Activated T-helper 2 cell treated with anti-CD3 and anti-CD28 coated beads, Interferon-gamma antibody, Interleukin-2, Interleukin-4, amounts not matched to agents 10 μg/mL and 5 μg/mL and 100 μg/mL, durations not matched to agents 14 hours and 24 hours and 36 hours (primary cell): ENCODE measurements at regions of chr2 and their contacts with region 1.

Region 1: GRCh38 chr2:181123798-181124231 is 143.4 kb downstream of the UBE2E3 start:
- DNase-seq: peak; percentile 74
- H3K4me3 Mint-ChIP-seq: peak overlapping the region; percentile 76
- H3K27ac Mint-ChIP-seq: peak overlapping the region; percentile 95
- H3K4me1 Mint-ChIP-seq: peaks cover 61% of the 10 kb centered on the region
- H3K27me3 Mint-ChIP-seq: no peaks in the 10 kb centered on the region

Region 2: DNA sequence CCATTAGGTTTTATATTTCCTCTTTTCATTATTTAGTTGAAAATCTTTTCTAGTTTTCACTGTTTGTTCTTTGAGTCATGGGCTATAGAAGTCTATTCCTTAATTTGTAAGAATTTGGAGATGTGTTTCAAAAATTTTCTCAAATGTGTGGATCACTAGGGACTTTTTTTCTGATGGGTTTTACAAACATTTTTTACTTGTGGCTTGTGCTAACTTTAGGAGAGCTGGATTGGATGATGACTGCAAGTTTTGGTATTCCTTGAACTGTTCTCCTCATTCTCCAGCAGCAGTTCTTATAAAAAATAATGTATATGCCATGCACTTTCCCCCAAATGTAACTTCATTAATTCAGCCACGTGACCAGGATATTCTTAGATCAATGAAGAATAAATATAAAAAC is 1022.0 kb before region 1 on chr2:
- intact Hi-C with region 1: no loop called
- DNase-seq: no peak
- H3K4me3 Mint-ChIP-seq: no peak overlapping the region
- H3K27ac Mint-ChIP-seq: no peak overlapping the region
- H3K4me1 Mint-ChIP-seq: no peaks in the 10 kb centered on the region
- H3K27me3 Mint-ChIP-seq: no peaks in the 10 kb centered on the region

Region 3: GRCh38 chr2:181085734-181086133 is 38.1 kb before region 1 on chr2:
- intact Hi-C with region 1: no loop called
- DNase-seq: no peak
- H3K4me3 Mint-ChIP-seq: no peak overlapping the region
- H3K27ac Mint-ChIP-seq: no peak overlapping the region
- H3K4me1 Mint-ChIP-seq: no peaks in the 10 kb centered on the region
- H3K27me3 Mint-ChIP-seq: peaks cover 5% of the 10 kb centered on the region

Region 4: DNA sequence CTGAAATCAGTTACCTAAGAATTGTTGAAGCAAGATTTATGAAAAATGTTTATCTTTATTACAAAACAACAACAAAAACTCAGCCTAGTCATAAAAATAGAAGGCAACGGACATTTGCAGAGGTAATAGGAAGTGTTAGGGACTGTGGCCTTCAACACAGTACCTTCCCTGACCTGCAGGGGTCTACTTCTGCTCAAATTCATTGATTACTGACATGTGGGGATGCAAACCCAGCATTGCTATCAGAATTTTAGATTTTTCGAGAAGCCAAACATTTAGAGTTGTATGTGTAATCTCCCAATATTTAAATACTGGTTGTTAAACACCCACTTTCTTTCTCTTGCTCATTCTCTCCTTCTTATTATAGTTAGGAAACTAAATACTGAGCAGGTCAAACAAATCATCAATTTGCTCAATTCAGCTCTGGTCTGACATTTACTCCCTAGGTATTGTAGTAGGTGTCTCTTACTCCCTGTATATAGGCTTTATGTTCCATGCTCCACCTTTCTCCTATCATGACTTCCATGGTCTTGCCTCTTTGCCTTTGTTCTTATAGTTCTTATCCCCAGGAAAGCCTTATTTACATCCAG is 55.1 kb after region 1 on chr2:
- intact Hi-C with region 1: loop called (anchors 1 kb)
- DNase-seq: no peak
- H3K4me3 Mint-ChIP-seq: no peak overlapping the region
- H3K27ac Mint-ChIP-seq: peak overlapping the region; percentile 86
- H3K4me1 Mint-ChIP-seq: peaks cover 53% of the 10 kb centered on the region
- H3K27me3 Mint-ChIP-seq: no peaks in the 10 kb centered on the region

Region 5: GRCh38 chr2:181223234-181223633 is 99.4 kb after region 1 on chr2:
- intact Hi-C with region 1: loop called (anchors 2 kb)
- DNase-seq: no peak
- H3K4me3 Mint-ChIP-seq: peak overlapping the region; percentile 43
- H3K27ac Mint-ChIP-seq: peak overlapping the region; percentile 98
- H3K4me1 Mint-ChIP-seq: peaks cover 24% of the 10 kb centered on the region
- H3K27me3 Mint-ChIP-seq: no peaks in the 10 kb centered on the region

Region 6: GRCh38 chr2:181305301-181306123 is 181.7 kb after region 1 on chr2:
- intact Hi-C with region 1: loop called (anchors 1 kb)
- DNase-seq: peak; percentile 70
- H3K4me3 Mint-ChIP-seq: peak overlapping the region; percentile 70
- H3K27ac Mint-ChIP-seq: peak overlapping the region; percentile 93
- H3K4me1 Mint-ChIP-seq: peaks cover 74% of the 10 kb centered on the region
- H3K27me3 Mint-ChIP-seq: no peaks in the 10 kb centered on the region

Region 7: DNA sequence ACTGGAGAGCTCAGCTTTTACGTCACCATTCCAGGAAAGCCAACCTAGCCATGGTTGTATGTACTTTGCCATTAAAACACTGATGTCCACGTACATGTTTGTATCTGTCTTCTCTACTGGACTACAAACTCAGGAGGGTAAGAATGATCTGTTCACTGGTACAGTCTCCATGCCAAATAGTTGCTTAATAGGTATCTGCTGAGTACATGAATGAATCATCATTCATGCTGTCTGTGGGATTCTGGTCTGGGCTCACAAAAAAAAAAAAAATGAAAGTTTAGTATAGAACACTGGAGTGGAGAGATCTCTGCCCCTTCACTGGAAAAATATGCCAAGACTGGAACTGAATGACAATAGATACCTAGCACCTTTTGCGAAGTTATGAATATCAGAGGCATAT is 230.8 kb after region 1 on chr2:
- intact Hi-C with region 1: loop called (anchors 5 kb)
- DNase-seq: no peak
- H3K4me3 Mint-ChIP-seq: no peak overlapping the region
- H3K27ac Mint-ChIP-seq: no peak overlapping the region
- H3K4me1 Mint-ChIP-seq: peaks cover 41% of the 10 kb centered on the region
- H3K27me3 Mint-ChIP-seq: no peaks in the 10 kb centered on the region

Region 8: GRCh38 chr2:181876614-181877063 is 752.8 kb after region 1 on chr2:
- intact Hi-C with region 1: no loop called
- DNase-seq: no peak
- H3K4me3 Mint-ChIP-seq: no peak overlapping the region
- H3K27ac Mint-ChIP-seq: no peak overlapping the region
- H3K4me1 Mint-ChIP-seq: no peaks in the 10 kb centered on the region
- H3K27me3 Mint-ChIP-seq: peaks cover 16% of the 10 kb centered on the region